SK-N-SH (cell line): ENCODE measurements at regions of chr3 and their contacts with region 1.

Region 1: GRCh38 chr3:65170390-65171042 is 482.7 kb upstream of the ADAMTS9 start:
- DNase-seq: peak; percentile 43
- H3K4me3 ChIP-seq: no peak overlapping the region
- H3K27ac ChIP-seq: peak overlapping the region in 1 of 2 experiments; percentile 86; a peak in 2 of 4 replicates
- H3K4me1 ChIP-seq: peaks cover 0 to 18% of the 10 kb centered on the region in 2 experiments; a peak in 2 of 4 replicates
- H3K27me3 ChIP-seq: no peaks in the 10 kb centered on the region
- CTCF ChIP-seq: peak; percentile 66
- EP300 ChIP-seq: peak in 1 of 2 experiments; percentile 53; a peak in 1 of 4 replicates
- RAD21 ChIP-seq: peak; percentile 88

Region 2: GRCh38 chr3:65081536-65081935 is 89.0 kb before region 1 on chr3:
- CTCF ChIA-PET with region 1: interaction called, 11 read pairs
- POLR2A ChIA-PET with region 1: no interaction called
- DNase-seq: no peak
- H3K4me3 ChIP-seq: no peak overlapping the region
- H3K27ac ChIP-seq: peak overlapping the region in 1 of 2 experiments; percentile 95; a peak in 2 of 4 replicates
- H3K4me1 ChIP-seq: peaks cover 0 to 19% of the 10 kb centered on the region in 2 experiments; a peak in 2 of 4 replicates
- H3K27me3 ChIP-seq: no peaks in the 10 kb centered on the region
- CTCF ChIP-seq: no peak
- EP300 ChIP-seq: no peak
- RAD21 ChIP-seq: no peak

Region 3: GRCh38 chr3:65181391-65181871 is 10.9 kb after region 1 on chr3:
- CTCF ChIA-PET with region 1: interaction called, 12 read pairs
- POLR2A ChIA-PET with region 1: no interaction called
- DNase-seq: no peak
- H3K4me3 ChIP-seq: no peak overlapping the region
- H3K27ac ChIP-seq: no peak overlapping the region; a peak in 1 of 4 replicates
- H3K4me1 ChIP-seq: peaks cover 0 to 27% of the 10 kb centered on the region in 2 experiments; a peak in 3 of 4 replicates
- H3K27me3 ChIP-seq: no peaks in the 10 kb centered on the region
- CTCF ChIP-seq: no peak
- EP300 ChIP-seq: no peak
- RAD21 ChIP-seq: no peak